Mucosa of descending colon (tissue), 3 donors: ENCODE measurements at regions of chr3 and their contacts with region 1.

Region 1: DNA sequence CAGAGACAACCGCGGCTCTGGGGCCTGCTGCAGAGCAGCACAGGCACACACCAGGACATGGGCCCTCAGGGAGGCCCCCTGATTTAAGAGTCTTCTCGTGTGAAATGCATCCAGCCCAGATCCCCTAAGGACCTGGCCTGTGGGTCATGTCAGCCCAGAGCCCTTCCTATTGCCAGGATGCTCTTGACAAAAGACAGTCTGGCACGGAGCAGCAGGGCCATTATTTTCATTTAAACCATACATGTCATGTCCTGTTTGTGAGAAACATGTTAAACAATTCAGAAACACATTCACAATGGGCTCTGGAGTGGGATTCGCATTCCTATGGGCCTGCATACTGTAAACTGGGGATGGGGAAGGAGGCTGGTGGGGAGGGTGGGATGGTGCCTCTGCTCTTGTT is 367.4 kb upstream of the WNT5A start:
- DNase-seq: no peak
- ATAC-seq: no peak
- H3K4me3 ChIP-seq: no peak overlapping the region
- H3K4me1 ChIP-seq: no peaks in the 10 kb centered on the region
- CTCF ChIP-seq: no peak

Region 2: GRCh38 chr3:55906896-55907295 is 52.4 kb after region 1 on chr3:
- intact Hi-C with region 1: loop called in 1 of 2 experiments (anchors 5 kb)
- DNase-seq: no peak
- ATAC-seq: no peak
- H3K4me3 ChIP-seq: no peak overlapping the region
- H3K4me1 ChIP-seq: no peaks in the 10 kb centered on the region
- CTCF ChIP-seq: no peak

Region 3: DNA sequence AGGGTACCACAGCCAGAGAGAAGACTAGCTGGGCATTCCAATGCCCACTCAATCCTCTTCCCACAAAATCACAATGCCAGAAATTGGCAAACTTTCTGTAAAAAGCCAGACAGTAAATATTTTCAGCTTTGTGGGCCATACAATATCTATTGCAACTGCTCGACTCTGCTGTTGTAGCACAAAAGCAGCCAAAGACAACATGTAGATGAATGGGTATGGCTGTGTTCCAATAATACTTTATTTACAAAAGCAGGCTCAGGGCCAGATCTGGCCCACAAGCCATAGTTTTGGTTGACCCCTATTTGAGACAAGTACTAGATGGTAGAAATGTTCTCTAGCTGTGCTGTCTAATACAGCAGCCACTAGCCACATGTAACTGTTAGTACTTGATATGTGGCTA is 282.9 kb after region 1 on chr3:
- intact Hi-C with region 1: no loop called
- DNase-seq: no peak
- ATAC-seq: no peak
- H3K4me3 ChIP-seq: no peak overlapping the region
- H3K4me1 ChIP-seq: no peaks in the 10 kb centered on the region
- CTCF ChIP-seq: no peak